ENCODE measurements at regions of chr7 and their contacts with region 1.

Region 1: DNA sequence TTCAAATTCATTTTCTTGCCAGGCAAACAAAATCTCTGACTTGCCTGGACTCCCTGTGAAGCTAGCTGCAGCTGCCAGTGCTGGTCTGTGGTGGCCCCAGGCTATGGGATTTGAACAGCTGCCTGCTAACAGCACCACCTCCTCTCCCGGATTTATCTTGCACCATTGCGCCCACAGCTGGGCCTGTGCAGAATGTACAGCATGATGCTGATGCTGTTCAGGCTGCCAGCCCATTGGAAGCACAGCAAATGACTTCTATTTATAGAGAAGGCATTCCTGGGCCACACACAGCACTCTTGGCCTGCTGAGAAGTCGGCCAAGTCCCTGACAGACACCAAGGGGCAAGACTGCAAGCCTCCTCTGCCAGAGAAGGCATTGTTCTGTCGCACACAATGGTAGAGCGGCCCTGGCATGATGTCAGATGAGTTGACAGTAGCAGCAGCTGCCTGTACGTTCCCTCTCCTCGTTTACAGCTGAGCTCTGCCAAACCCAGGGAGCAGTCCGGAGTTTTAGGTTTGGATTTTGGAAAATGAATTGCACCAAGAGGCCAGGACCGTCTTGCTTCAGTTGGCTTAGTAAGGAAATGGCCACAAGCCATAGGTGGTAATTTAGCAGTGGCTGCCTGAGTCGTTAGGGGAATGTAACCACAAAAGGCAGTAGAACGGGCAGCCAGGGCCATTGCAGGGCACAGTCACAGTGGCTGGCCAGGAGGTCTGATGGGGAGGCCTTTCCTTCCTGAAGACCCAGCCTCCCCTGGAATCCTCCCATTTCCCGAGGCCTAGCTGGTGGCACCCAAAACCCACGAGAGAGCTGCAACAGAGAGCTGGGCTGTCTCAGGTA is 38.5 kb downstream of the MTURN start:
- DNase-seq: peak; percentile 99
- H3K4me3 ChIP-seq: no peak overlapping the region
- H3K27ac ChIP-seq: peak overlapping the region; percentile 91
- H3K4me1 ChIP-seq: peaks cover 51% of the 10 kb centered on the region
- H3K27me3 ChIP-seq: no peaks in the 10 kb centered on the region
- CTCF ChIP-seq: peak; percentile 50 to 84

Region 2: DNA sequence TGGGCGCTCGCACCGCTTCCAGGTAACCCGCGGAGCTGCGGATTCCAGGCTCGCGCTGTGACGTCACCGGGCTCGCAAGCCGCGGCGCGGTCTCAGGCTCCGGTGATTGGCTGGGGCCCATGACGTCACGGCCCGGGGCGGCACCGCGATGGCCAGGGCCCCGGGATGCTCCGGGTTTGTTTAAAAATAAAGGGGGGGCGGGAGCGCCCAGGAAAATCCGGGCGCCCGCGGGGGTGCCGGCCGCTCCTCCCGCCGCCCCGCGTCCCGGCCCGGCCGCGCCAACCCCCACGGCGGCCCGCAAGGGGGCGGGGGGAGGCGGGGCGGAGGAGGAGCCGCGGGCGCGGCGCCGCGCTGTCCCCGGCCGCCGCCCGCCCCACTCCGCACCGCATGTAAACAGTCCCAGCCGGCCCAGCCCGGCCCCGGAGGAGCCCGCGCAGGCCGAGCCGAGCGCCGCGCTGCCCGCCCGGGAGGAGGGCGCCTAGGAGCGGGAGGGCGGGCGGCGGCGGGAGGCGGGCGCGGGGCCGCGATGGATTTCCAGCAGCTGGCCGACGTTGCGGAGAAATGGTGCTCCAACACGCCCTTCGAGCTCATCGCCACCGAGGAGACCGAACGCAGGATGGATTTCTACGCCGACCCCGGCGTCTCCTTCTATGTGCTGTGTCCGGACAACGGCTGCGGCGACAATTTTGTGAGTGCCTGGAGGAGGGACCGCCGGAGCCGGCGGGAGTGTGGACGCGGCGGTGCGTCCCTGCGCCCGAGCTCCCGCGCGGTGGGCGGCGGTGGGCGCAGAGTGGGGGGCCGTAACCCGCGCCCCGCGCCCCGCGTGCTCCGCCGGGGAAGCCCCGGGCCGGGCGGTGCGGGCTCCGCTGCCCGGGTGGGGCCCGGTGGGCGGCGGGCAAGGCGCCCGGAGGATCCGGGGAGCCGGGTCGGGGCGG is 38.4 kb before region 1 on chr7 and contains the start of gene MTURN:
- CTCF ChIA-PET with region 1: no interaction called
- dilution Hi-C with region 1: no loop called
- in situ Hi-C with region 1: no loop called
- intact Hi-C with region 1: loop called (anchors 2 kb)
- DNase-seq: peak; percentile 76
- H3K4me3 ChIP-seq: peak within 1 kb of the TSS; percentile 57 to 74 (median 73)
- H3K27ac ChIP-seq: peak within 1 kb of the TSS; percentile 66
- H3K4me1 ChIP-seq: peaks cover 14% of the 10 kb centered on the region
- H3K27me3 ChIP-seq: no peaks in the 10 kb centered on the region
- CTCF ChIP-seq: no peak
- total RNA-seq, gene MTURN: 9.7 to 15.5 TPM

Region 3: GRCh38 chr7:30225863-30226613 is 52.8 kb after region 1 on chr7:
- CTCF ChIA-PET with region 1: no interaction called
- dilution Hi-C with region 1: no loop called
- in situ Hi-C with region 1: no loop called
- intact Hi-C with region 1: loop called (anchors 1 kb)
- DNase-seq: peak; percentile 97
- H3K4me3 ChIP-seq: no peak overlapping the region
- H3K27ac ChIP-seq: peak overlapping the region; percentile 83
- H3K4me1 ChIP-seq: peaks cover 37% of the 10 kb centered on the region
- H3K27me3 ChIP-seq: no peaks in the 10 kb centered on the region
- CTCF ChIP-seq: no peak

Region 4: GRCh38 chr7:30240106-30240800 is 67.0 kb after region 1 on chr7:
- CTCF ChIA-PET with region 1: no interaction called
- dilution Hi-C with region 1: loop called (anchors 5 kb)
- in situ Hi-C with region 1: no loop called
- intact Hi-C with region 1: loop called (anchors 2 kb)
- DNase-seq: peak; percentile 61
- H3K4me3 ChIP-seq: no peak overlapping the region
- H3K27ac ChIP-seq: no peak overlapping the region
- H3K4me1 ChIP-seq: peaks cover 37% of the 10 kb centered on the region
- H3K27me3 ChIP-seq: no peaks in the 10 kb centered on the region
- CTCF ChIP-seq: no peak

Region 5: GRCh38 chr7:30322271-30323005 is 149.2 kb after region 1 on chr7:
- CTCF ChIA-PET with region 1: no interaction called
- dilution Hi-C with region 1: no loop called
- in situ Hi-C with region 1: no loop called
- intact Hi-C with region 1: no loop called
- DNase-seq: peak; percentile 58
- H3K4me3 ChIP-seq: peak overlapping the region in 2 of 3 experiments; percentile 5 to 44
- H3K27ac ChIP-seq: peak overlapping the region; percentile 87
- H3K4me1 ChIP-seq: peaks cover 50% of the 10 kb centered on the region
- H3K27me3 ChIP-seq: no peaks in the 10 kb centered on the region
- CTCF ChIP-seq: no peak

Region 6: DNA sequence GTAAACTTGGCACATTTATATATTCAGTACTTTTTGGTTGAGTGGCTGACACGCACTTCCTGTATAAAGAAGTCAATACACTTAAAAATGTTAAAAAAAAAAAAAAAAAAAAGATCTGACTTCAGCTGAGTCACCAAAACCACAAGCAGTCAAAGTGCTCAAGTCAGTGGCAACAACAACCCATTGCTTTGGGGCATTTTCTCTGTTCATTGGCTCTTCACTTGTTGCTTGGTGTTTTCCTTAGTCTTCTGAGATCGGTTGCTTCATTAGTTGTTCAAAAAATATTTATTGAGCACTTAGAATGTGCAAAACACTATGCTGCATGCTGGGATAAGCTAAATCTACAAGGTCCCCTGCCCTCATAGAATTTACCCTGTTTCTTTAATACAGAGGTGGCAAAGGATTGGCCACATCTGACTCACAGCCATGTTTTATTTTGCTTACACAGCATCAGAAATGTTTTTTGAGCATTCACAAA is 174.8 kb after region 1 on chr7:
- CTCF ChIA-PET with region 1: no interaction called
- dilution Hi-C with region 1: no loop called
- in situ Hi-C with region 1: no loop called
- intact Hi-C with region 1: loop called (anchors 1 kb)
- DNase-seq: peak; percentile 92
- H3K4me3 ChIP-seq: peak overlapping the region in 1 of 3 experiments; percentile 41
- H3K27ac ChIP-seq: peak overlapping the region; percentile 68
- H3K4me1 ChIP-seq: peaks cover 21% of the 10 kb centered on the region
- H3K27me3 ChIP-seq: no peaks in the 10 kb centered on the region
- CTCF ChIP-seq: no peak

Region 7: DNA sequence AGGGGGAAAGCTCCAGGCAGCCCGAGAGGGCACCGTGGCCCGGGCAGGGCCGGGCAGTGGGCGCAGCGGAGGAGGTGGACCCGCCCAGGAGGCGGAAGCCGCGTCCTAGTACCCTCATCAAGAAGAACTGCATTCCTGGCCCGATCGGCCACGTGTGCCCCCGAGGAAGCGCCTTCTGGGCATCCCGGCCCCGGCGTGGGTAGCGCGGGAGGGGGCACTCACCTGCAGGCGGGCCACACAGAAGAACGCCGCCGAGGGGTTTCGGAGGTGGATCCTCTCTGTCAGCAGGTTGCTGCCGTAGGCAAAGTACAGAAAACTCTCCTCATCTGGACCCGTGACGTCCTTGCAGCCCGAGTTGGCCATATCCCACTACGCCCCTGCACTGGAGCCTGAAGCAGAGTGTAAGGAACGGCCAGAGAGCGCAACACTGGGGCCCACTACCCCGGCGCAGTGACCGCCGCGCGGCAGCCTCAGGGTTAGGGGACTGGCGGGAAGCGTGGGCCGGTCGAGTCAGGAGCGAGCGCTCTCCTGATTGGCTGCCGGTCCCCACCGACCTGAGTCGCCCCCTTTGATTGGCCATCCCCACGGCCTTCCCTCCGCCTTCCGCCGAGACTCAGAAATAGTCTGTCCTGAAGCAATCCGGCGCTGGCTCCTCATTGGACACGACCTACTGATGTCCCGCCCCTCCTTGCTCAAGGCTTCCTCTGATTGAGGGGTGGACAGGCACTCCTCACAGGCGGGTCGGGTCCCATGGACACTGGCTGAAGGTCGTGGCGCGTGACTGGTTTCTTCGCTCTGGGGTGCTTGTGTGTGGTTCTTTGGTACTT is 331.3 kb after region 1 on chr7 and contains the start of gene GGCT:
- CTCF ChIA-PET with region 1: no interaction called
- dilution Hi-C with region 1: no loop called
- in situ Hi-C with region 1: no loop called
- intact Hi-C with region 1: loop called (anchors 5 kb)
- DNase-seq: peak; percentile 97
- H3K4me3 ChIP-seq: peak within 1 kb of the TSS; percentile 74 to 99 (median 88)
- H3K27ac ChIP-seq: peak within 1 kb of the TSS; percentile 72
- H3K4me1 ChIP-seq: peaks cover 29% of the 10 kb centered on the region
- H3K27me3 ChIP-seq: no peaks in the 10 kb centered on the region
- CTCF ChIP-seq: no peak
- total RNA-seq, gene GGCT: 25.7 to 60.3 TPM

Region 8: GRCh38 chr7:31100445-31100844 is 927.2 kb after region 1 on chr7:
- CTCF ChIA-PET with region 1: no interaction called
- dilution Hi-C with region 1: no loop called
- in situ Hi-C with region 1: no loop called
- intact Hi-C with region 1: no loop called
- DNase-seq: peak; percentile 23
- H3K4me3 ChIP-seq: no peak overlapping the region
- H3K27ac ChIP-seq: no peak overlapping the region
- H3K4me1 ChIP-seq: no peaks in the 10 kb centered on the region
- H3K27me3 ChIP-seq: no peaks in the 10 kb centered on the region
- CTCF ChIP-seq: no peak